Activated CD4-positive, alpha-beta T cell treated with anti-CD3 and anti-CD28 coated beads, Interleukin-2, amount 10 ng/mL, durations not matched to agents 24 days and 14 days (primary cell): ENCODE measurements at regions of chr2 and their contacts with region 1.

Region 1: DNA sequence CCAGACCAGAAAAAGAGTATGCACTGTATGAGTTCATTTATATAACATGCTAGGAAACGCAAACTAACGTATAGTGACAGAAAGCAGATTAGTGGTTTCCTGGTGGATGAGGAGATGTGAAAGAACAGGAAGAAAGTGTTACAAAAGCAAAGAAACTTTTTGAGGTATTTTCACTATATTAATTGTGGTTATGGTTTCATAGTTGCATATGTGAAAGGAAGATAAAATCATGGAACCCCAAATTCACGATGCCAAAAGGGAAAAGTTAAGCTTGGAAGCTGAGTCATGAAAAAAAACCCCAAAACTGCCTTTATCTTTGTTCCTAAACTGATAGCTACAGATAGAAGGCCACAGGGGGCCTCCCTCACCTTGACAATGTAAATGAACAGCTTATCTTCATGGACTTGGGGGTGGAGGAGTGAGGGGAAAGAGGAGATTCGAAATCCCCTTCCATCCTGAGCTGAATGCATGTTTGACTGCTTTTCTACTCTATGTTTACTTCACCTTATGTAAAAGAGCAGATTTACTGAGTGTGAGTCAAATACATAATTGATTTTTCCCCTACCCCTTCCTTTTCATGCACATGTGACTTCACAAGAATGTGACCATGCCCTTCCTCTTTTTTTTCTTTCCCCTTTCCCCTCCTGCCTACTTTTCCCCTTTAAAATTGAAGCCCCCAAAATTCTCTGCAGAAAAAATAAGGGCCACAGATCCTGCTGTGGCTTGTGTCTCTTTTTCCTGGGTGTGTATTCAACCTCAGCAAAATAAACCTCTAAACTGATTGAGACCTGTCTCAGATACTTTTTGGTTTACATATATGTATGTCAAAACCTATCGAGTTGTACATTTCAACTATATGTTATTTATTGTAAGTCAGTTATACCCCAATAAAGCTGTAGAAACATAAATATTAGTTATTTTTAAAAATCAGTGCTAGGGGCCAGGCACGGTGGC is 100.1 kb upstream of the TLK1 start:
- DNase-seq: peak; percentile 62
- H3K4me3 Mint-ChIP-seq: peak overlapping the region; percentile 10
- H3K27ac Mint-ChIP-seq: peak overlapping the region; percentile 83
- H3K4me1 Mint-ChIP-seq: peaks cover 28% of the 10 kb centered on the region
- H3K27me3 Mint-ChIP-seq: no peaks in the 10 kb centered on the region

Region 2: GRCh38 chr2:170928824-170929685 is 331.7 kb before region 1 on chr2 and contains the start of gene GORASP2:
- intact Hi-C with region 1: loop called (anchors 2 kb)
- DNase-seq: peak; percentile 99
- H3K4me3 Mint-ChIP-seq: peak within 1 kb of the TSS; percentile 92
- H3K27ac Mint-ChIP-seq: peak within 1 kb of the TSS; percentile 97
- H3K4me1 Mint-ChIP-seq: peaks cover 32% of the 10 kb centered on the region
- H3K27me3 Mint-ChIP-seq: no peaks in the 10 kb centered on the region
- total RNA-seq, gene GORASP2: 93.0 and 96.7 TPM in 2 replicates

Region 3: GRCh38 chr2:171086352-171087290 is 174.1 kb before region 1 on chr2:
- intact Hi-C with region 1: loop called (anchors 2 kb)
- DNase-seq: peak; percentile 84
- H3K4me3 Mint-ChIP-seq: peak overlapping the region; percentile 83
- H3K27ac Mint-ChIP-seq: peak overlapping the region; percentile 87
- H3K4me1 Mint-ChIP-seq: peaks cover 53% of the 10 kb centered on the region
- H3K27me3 Mint-ChIP-seq: no peaks in the 10 kb centered on the region

Region 4: GRCh38 chr2:171225302-171225980 is 35.3 kb before region 1 on chr2:
- intact Hi-C with region 1: loop called (anchors 5 kb)
- DNase-seq: no peak
- H3K4me3 Mint-ChIP-seq: no peak overlapping the region
- H3K27ac Mint-ChIP-seq: no peak overlapping the region
- H3K4me1 Mint-ChIP-seq: peaks cover 6% of the 10 kb centered on the region
- H3K27me3 Mint-ChIP-seq: peaks cover 3% of the 10 kb centered on the region

Region 5: DNA sequence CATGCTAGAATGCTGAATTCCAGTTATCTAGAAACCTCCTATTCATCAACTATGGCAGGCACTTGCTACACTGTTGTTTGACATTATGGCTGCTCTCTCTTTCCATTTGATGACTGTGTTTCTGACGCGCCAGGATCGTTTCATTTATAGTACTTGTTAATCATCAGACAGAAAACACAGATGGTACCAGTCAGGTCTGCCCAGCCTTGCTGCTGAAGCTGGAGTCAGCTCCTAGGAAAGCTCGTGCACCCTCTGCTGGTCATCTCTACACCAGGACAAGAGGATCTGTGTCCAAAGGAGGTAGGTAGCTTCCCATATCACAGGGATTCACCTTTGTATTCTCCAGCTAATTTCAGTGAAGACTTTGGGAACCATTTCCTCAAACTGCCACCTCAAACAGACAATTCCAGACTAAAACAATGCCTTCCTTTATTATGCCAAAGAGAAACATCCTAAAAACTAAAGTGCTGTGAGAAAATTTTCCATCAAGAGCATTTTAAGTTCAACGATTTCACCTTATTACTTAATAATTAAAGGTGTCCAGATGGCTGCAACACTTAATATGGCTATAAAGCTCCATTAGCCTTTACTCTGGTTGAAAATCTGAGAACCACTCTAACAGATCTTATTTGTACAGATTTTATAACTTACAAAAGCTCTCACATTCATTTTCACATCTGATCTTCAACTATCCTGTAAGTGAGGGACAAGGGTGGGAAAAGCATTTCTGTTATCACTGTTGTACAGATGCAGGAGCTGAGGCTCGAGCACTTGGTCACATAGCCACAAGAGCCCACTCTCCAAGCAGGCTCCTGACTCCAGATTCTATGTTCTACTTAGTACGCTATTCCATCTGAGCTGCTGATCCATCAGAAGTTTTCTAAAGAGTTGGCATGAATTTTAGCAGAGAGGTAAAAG is 155.5 kb after region 1 on chr2:
- intact Hi-C with region 1: loop called (anchors 1 kb)
- DNase-seq: peak; percentile 93
- H3K4me3 Mint-ChIP-seq: no peak overlapping the region
- H3K27ac Mint-ChIP-seq: peak overlapping the region; percentile 80
- H3K4me1 Mint-ChIP-seq: peaks cover 23% of the 10 kb centered on the region
- H3K27me3 Mint-ChIP-seq: no peaks in the 10 kb centered on the region